CD4-positive, alpha-beta memory T cell (primary cell): ENCODE measurements at regions of chr4 and their contacts with region 1.

Region 1: DNA sequence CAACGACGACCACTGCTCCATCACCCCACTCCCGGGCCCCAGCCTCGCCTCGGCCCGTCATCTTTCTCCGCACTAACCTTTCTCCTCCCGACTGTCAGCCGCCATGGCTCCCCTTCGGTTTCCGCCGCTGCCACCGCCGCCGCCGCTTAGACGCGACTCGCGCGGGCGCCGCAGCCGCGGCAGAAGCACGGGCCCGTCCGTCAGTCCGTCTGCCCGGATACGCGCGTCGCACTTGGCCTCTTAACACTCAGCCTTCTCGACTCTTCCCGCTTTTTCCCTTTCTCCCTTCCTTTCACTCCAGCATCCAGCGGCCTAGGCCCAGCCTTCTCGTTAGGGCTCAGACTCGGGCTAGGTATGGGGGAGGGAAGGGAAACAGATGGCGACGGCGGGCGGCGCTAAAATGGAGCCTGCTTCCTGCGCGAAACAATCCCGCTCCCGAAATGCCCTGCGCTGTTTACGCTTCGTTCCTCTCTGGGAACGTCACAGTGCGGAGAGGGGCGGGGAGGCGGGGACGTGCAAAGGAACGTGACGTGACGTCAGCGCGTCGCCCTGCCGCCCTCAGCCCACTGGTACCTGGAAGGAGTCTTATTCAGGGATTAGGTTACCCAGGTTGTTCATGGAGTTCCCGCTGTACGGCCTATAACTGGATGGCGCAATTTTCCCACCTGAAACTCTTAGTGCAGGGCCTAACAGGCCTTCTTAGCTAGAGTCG is at the start of gene YTHDC1:
- DNase-seq: peak; percentile 93 to 97 (median 94)
- H3K4me3 ChIP-seq: peak within 1 kb of the TSS; percentile 79 to 89
- H3K4me3 Mint-ChIP-seq: peak within 1 kb of the TSS; percentile 96 to 100 (median 98)
- H3K27ac ChIP-seq: peak within 1 kb of the TSS; percentile 96
- H3K27ac Mint-ChIP-seq: peak within 1 kb of the TSS; percentile 99 to 100 (median 100)
- H3K4me1 ChIP-seq: peaks cover 47% of the 10 kb centered on the region
- H3K4me1 Mint-ChIP-seq: peaks cover 28 to 52% (median 36%) of the 10 kb centered on the region in 4 donors
- H3K27me3 ChIP-seq: no peaks in the 10 kb centered on the region
- H3K27me3 Mint-ChIP-seq: peaks cover 0 to 2% of the 10 kb centered on the region in 2 donors
- total RNA-seq, gene YTHDC1: 187 to 201 TPM

Region 2: DNA sequence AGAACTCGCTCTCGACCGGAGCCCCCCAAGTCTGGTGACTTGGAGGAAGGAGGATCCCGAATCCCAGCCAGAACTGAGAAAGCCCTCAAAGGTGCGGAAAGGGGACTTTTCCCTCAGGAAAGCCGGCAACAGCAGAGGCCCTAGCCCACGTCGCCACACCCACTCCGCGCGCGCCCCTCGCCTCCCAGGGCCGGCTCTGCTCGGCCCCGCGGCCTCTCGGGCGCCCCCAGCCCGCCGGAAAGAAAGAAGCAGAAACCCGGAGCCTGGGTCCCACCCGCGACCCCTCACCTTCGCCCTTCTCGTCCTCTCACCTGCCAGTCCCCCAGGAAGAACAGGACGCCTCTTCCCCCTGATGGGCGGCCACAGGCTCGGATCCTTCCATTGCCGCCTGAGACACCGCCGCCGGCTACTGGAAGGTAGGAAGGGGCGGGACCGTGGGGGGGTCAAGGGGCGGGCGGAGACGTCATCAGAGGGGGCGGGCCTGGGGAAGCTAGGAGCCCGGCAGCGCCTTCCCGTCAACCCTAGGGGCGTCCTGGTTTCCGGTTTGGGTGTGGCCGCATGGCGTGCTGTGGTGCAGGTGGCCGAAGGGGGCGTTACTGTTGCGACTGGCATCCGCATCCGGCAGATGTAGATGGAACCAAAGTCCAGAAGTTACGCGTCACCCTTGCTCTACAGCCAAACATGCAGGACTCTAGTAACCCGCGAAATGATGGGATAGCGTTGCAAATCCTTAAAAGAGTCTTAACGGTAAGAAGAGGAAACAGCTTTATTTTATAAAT is 648.9 kb before region 1 on chr4 and contains the start of gene UBA6:
- CTCF ChIA-PET with region 1: no interaction called
- POLR2A ChIA-PET with region 1: no interaction called
- intact Hi-C with region 1: loop called (anchors 5 kb)
- DNase-seq: peak; percentile 91 to 95 (median 92)
- H3K4me3 ChIP-seq: peak within 1 kb of the TSS; percentile 85 to 93
- H3K4me3 Mint-ChIP-seq: peak within 1 kb of the TSS; percentile 94 to 99 (median 98)
- H3K27ac ChIP-seq: peak within 1 kb of the TSS; percentile 94
- H3K27ac Mint-ChIP-seq: peak within 1 kb of the TSS; percentile 86 to 99 (median 98)
- H3K4me1 ChIP-seq: peaks cover 56% of the 10 kb centered on the region
- H3K4me1 Mint-ChIP-seq: peaks cover 45 to 71% (median 60%) of the 10 kb centered on the region in 4 donors
- H3K27me3 ChIP-seq: no peaks in the 10 kb centered on the region
- H3K27me3 Mint-ChIP-seq: no peaks in the 10 kb centered on the region
- total RNA-seq, gene UBA6: 55.1 to 55.8 TPM

Region 3: GRCh38 chr4:68434836-68435235 is 85.0 kb after region 1 on chr4:
- CTCF ChIA-PET with region 1: no interaction called
- POLR2A ChIA-PET with region 1: interaction called, 3 read pairs
- intact Hi-C with region 1: loop called (anchors 1 kb)
- DNase-seq: no peak
- H3K4me3 ChIP-seq: no peak overlapping the region
- H3K4me3 Mint-ChIP-seq: peak overlapping the region in 3 of 8 donors; percentile 20 to 76 (median 61)
- H3K27ac ChIP-seq: no peak overlapping the region
- H3K27ac Mint-ChIP-seq: no peak overlapping the region
- H3K4me1 ChIP-seq: peaks cover 39% of the 10 kb centered on the region
- H3K4me1 Mint-ChIP-seq: peaks cover 28 to 60% (median 45%) of the 10 kb centered on the region in 4 donors
- H3K27me3 ChIP-seq: no peaks in the 10 kb centered on the region
- H3K27me3 Mint-ChIP-seq: no peaks in the 10 kb centered on the region